Activated CD4-positive, alpha-beta memory T cell treated with anti-CD3 and anti-CD28 coated beads, Interleukin-2, amount 10 ng/mL, durations not matched to agents 7 days and 5 days (primary cell): ENCODE measurements at regions of chr6 and their contacts with region 1.

Region 1: GRCh38 chr6:166236596-166236995 is 68.9 kb upstream of the TBXT start:
- DNase-seq: no peak
- H3K4me3 Mint-ChIP-seq: no peak overlapping the region
- H3K27ac Mint-ChIP-seq: no peak overlapping the region
- H3K4me1 Mint-ChIP-seq: peaks cover 18% of the 10 kb centered on the region
- H3K27me3 Mint-ChIP-seq: peaks cover 44% of the 10 kb centered on the region

Region 2: DNA sequence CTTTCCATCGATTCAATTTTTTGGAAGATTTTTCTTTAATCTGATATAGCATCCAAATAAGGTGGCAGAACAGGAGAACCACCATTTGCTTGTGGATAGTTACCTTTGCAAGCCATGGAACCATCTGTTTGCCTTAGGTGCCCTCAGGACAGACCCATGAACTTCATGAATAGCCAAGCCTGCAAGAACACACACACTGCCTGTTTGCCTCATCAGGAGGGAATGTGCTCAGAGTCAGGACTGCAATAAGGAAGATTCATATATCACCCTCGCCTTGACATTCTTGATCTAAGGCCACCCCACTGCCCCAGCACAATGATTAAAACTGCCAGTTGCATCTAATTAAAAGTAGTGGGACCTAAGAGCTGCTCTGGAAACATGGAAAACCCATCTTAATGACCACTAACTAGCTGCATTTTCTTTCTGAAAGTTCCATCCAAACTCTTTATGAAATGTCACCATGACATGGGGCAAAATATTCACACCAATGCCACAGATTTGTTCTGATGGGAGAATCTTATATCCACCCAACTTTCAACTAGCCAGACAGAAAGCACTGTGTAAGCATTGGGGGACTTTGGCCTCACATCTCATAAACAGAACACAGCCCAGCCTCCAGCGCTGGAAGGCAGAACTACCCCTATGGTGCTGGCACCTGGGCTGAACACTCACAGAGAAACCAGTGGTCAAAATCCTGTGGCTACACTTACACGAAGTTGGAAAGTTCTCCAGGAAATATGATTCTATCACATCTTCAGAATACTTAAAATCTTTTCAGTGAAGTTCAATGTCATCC is 117.3 kb before region 1 on chr6:
- CTCF ChIA-PET with region 1: no interaction called
- POLR2A ChIA-PET with region 1: no interaction called
- DNase-seq: no peak
- H3K4me3 Mint-ChIP-seq: no peak overlapping the region
- H3K27ac Mint-ChIP-seq: no peak overlapping the region
- H3K4me1 Mint-ChIP-seq: no peaks in the 10 kb centered on the region
- H3K27me3 Mint-ChIP-seq: no peaks in the 10 kb centered on the region

Region 3: DNA sequence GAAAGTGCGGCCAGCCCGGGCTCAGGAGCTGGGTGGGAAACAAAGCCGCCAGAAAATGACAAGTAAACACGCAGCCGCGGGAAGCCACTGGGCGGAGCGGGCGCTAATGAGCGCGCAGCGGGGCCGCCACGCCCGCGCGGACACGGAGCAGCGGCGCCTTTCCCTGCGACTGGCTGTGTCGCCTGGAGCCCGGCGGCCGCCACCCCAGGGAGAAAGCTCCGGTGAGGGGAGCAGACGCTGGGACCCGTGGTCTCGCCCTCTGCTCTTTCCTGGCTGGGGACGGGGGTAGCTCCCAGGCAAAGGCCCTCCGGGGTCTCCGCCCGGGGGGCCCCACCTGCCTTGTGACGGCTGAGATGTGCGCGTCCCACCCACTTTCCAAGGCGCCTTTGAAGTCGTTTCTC is 16.7 kb after region 1 on chr6:
- CTCF ChIA-PET with region 1: interaction called, 23 read pairs
- POLR2A ChIA-PET with region 1: interaction called, 5 read pairs
- DNase-seq: peak; percentile 31
- H3K4me3 Mint-ChIP-seq: peak overlapping the region; percentile 65
- H3K27ac Mint-ChIP-seq: no peak overlapping the region
- H3K4me1 Mint-ChIP-seq: peaks cover 25% of the 10 kb centered on the region
- H3K27me3 Mint-ChIP-seq: peaks cover 56% of the 10 kb centered on the region

Region 4: GRCh38 chr6:166258854-166259276 is 22.3 kb after region 1 on chr6:
- CTCF ChIA-PET with region 1: interaction called, 23 read pairs
- POLR2A ChIA-PET with region 1: interaction called, 5 read pairs
- DNase-seq: peak; percentile 65
- H3K4me3 Mint-ChIP-seq: peak overlapping the region; percentile 58
- H3K27ac Mint-ChIP-seq: peak overlapping the region; percentile 88
- H3K4me1 Mint-ChIP-seq: peaks cover 32% of the 10 kb centered on the region
- H3K27me3 Mint-ChIP-seq: peaks cover 36% of the 10 kb centered on the region

Region 5: GRCh38 chr6:166728957-166729441 is 492.4 kb after region 1 on chr6:
- CTCF ChIA-PET with region 1: no interaction called
- POLR2A ChIA-PET with region 1: no interaction called
- DNase-seq: peak; percentile 7
- H3K4me3 Mint-ChIP-seq: no peak overlapping the region
- H3K27ac Mint-ChIP-seq: no peak overlapping the region
- H3K4me1 Mint-ChIP-seq: no peaks in the 10 kb centered on the region
- H3K27me3 Mint-ChIP-seq: no peaks in the 10 kb centered on the region